PC-9 (cell line): ENCODE measurements at regions of chr2 and their contacts with region 1.

Region 1: DNA sequence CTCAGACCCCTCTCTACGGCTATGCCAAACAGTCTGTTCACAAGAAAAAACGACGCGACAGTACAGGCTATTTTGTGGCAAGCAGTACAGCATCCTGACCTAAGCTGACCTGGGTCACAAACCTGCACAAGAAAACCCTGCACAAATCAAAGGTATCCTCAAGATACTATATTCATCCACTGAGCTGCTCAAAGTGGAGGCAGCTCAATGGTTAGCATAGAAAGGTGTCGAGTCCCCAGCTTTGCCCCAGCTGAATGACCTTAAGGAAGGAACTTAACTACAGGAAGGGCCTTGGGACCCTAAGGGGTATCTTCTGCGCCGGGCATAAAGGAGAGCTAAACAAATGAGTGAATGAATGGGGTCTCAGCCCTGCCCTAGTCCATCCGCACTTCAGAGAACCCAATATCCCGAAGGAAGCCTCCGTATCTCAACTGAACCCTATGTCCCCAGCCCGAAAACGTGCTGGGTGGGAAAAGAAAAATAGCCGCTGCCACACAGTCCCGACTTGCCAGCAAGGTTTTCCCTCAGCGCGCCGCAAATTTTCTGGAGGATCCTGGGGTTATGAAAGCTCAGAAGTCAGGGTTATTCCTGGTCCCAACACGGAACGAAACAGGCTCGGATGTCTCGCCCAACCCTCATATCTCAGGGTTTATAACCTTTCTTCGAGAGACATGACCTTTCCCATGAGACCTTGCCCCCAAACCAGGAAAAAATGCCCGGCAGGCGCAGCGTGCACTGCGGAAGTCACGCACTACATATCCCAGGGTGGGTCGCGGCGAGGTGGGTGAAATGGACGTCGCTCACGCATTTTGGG is at the start of gene FASTKD1:
- DNase-seq: peak; percentile 73 to 75
- H3K4me3 ChIP-seq: peak within 1 kb of the TSS; percentile 75
- H3K27ac ChIP-seq: no peak within 1 kb of the TSS
- H3K4me1 ChIP-seq: no peaks in the 10 kb centered on the region
- H3K27me3 ChIP-seq: no peaks in the 10 kb centered on the region
- CTCF ChIP-seq: no peak
- total RNA-seq, gene FASTKD1: 19.2 and 22.5 TPM in 2 replicates

Region 2: DNA sequence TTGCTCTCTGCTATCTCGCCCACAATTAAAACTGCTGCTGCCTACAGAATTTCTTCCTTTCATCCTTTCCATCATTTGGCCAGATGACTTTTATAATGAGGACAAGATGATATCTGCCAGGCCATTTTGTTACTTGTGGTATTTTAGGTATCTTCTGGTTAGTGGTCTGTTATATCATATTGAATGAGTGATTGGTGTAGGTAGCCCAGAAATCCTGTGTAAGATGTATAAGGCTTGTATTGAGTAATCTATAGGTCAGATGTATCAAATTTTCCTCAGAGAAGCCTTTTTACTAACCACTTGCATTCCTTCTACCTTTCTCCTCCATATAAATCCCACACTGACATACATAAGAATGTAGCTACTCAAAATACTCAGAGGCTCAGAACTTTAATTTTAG is 372.1 kb after region 1 on chr2:
- CTCF ChIA-PET with region 1: interaction called, 11 read pairs
- POLR2A ChIA-PET with region 1: no interaction called
- intact Hi-C with region 1: no loop called
- DNase-seq: no peak
- H3K4me3 ChIP-seq: no peak overlapping the region
- H3K27ac ChIP-seq: no peak overlapping the region
- H3K4me1 ChIP-seq: no peaks in the 10 kb centered on the region
- H3K27me3 ChIP-seq: no peaks in the 10 kb centered on the region
- CTCF ChIP-seq: no peak